ENCODE measurements at regions of chr3 and their contacts with region 1.

Region 1: GRCh38 chr3:169676925-169677537 is 13.5 kb upstream of the MECOM start:
- DNase-seq: no peak
- ATAC-seq: no peak
- H3K4me3 ChIP-seq: no peak overlapping the region
- H3K27ac ChIP-seq: no peak overlapping the region
- H3K4me1 ChIP-seq: no peaks in the 10 kb centered on the region
- H3K27me3 ChIP-seq: peaks cover 0 to 25% (median 6%) of the 10 kb centered on the region in 7 donors
- CTCF ChIP-seq: no peak

Region 2: DNA sequence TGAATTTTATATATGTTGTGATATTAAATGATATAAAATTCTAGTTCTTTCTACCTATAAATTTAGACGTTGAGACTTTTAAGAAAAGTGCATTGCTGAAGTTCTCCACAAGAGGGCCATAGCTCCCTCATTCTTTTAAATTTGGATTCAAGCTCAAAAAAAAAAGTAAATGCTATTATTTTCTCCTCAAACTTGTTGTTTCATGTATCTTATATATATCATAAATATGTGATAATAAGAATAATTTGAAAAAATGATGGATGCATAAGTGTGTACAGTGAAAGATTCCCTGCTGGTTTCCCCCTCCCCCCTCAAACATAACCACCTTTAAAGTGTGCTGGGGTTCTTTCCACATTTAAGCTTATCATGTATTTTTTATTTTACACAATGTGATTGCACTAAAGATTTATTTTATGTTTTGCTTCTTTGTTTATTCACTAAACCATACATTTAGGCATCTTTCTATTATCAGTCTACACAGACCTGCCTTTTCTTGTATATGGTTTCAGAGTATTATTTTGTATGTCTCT is 811.9 kb before region 1 on chr3:
- intact Hi-C with region 1: loop called in 2 of 10 experiments (anchors 5 to 10 kb)
- DNase-seq: no peak
- ATAC-seq: no peak
- H3K4me3 ChIP-seq: peak overlapping the region in 5 of 10 donors; percentile 13 to 37 (median 23)
- H3K27ac ChIP-seq: peak overlapping the region in 1 of 10 donors; percentile 36
- H3K4me1 ChIP-seq: peaks cover 0 to 4% (median 0%) of the 10 kb centered on the region in 9 donors
- H3K27me3 ChIP-seq: no peaks in the 10 kb centered on the region
- CTCF ChIP-seq: peak; percentile 62 to 84 (median 73)

Region 3: DNA sequence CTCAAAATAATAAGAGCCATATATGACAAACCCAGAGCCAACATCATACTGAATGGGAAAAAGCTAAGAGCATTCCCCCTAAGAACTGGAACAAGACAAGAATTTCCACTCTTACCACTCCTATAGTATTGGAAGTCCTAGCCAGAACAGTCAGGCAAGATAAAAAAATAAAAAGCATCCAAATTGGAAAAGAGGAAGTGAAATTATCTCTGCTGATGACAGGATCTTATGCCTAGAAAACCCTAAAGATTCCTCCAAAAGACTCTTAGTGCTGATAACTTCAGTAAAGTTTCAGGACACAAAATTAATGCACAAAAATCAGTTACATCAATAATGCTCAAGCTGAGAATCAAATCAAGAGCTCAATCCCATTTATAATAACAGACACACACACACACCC is 1395.4 kb after region 1 on chr3:
- intact Hi-C with region 1: no loop called
- DNase-seq: no peak
- ATAC-seq: no peak
- H3K4me3 ChIP-seq: no peak overlapping the region
- H3K27ac ChIP-seq: no peak overlapping the region
- H3K4me1 ChIP-seq: no peaks in the 10 kb centered on the region
- H3K27me3 ChIP-seq: no peaks in the 10 kb centered on the region
- CTCF ChIP-seq: no peak

Measured in heart right ventricle (tissue), 16 donors.